ENCODE measurements at regions of chr3 and their contacts with region 1.

Region 1: DNA sequence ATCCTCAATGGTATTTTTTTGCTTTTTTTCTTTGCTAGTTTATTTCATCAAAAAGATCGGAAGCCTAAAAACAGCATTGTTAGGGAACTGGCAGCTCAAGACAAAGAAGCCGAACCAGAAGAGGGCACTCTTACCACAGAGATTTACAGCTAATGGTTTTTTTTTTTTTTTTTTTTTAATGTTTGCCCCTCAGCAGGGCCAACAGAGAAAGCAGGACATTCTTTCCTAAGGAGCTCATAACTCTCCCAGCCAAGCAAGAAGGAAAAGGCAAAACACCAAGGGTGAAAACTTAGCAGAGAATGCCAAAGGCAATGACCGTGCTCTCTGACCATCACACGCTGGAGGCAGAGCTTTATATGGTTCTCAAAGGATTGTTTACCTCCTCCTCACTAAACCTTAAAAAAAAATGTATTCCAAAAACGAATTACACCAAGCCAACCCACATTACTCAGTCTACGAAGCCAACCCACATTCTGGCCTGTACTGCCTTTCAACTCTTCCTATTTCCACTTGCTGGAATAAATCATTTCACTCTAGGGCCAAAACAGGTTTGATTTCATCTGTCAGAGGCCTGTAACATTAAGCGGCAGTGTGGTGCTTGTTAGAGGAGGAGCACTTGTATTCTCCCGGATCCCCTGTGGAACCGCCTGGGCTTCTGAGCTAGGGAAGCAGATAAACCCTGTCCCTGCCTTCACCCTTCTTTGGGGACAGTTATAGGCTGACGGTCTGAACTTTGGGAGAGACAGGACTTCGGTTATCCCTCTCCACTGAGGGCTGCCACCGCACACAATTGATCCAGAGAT is 35.6 kb upstream of the GYG1 start:
- DNase-seq: peak; percentile 41 to 59
- H3K4me3 ChIP-seq: no peak overlapping the region
- H3K4me3 Mint-ChIP-seq: no peak overlapping the region
- H3K27ac Mint-ChIP-seq: no peak overlapping the region
- H3K4me1 ChIP-seq: peaks cover 4% of the 10 kb centered on the region; the same call in 1 of the 2 replicates
- H3K4me1 Mint-ChIP-seq: no peaks in the 10 kb centered on the region
- H3K27me3 ChIP-seq: no peaks in the 10 kb centered on the region; the same call in 1 of the 2 replicates
- H3K27me3 Mint-ChIP-seq: peaks cover 4% of the 10 kb centered on the region
- CTCF ChIP-seq: peak; percentile 29 to 77

Region 2: GRCh38 chr3:149020196-149020838 is 64.6 kb after region 1 on chr3:
- CTCF ChIA-PET with region 1: no interaction called
- POLR2A ChIA-PET with region 1: no interaction called
- intact Hi-C with region 1: loop called (anchors 5 kb)
- DNase-seq: no peak
- H3K4me3 ChIP-seq: no peak overlapping the region
- H3K4me3 Mint-ChIP-seq: no peak overlapping the region
- H3K27ac Mint-ChIP-seq: no peak overlapping the region
- H3K4me1 ChIP-seq: no peaks in the 10 kb centered on the region
- H3K4me1 Mint-ChIP-seq: no peaks in the 10 kb centered on the region
- H3K27me3 ChIP-seq: no peaks in the 10 kb centered on the region
- H3K27me3 Mint-ChIP-seq: no peaks in the 10 kb centered on the region
- CTCF ChIP-seq: no peak

Region 3: DNA sequence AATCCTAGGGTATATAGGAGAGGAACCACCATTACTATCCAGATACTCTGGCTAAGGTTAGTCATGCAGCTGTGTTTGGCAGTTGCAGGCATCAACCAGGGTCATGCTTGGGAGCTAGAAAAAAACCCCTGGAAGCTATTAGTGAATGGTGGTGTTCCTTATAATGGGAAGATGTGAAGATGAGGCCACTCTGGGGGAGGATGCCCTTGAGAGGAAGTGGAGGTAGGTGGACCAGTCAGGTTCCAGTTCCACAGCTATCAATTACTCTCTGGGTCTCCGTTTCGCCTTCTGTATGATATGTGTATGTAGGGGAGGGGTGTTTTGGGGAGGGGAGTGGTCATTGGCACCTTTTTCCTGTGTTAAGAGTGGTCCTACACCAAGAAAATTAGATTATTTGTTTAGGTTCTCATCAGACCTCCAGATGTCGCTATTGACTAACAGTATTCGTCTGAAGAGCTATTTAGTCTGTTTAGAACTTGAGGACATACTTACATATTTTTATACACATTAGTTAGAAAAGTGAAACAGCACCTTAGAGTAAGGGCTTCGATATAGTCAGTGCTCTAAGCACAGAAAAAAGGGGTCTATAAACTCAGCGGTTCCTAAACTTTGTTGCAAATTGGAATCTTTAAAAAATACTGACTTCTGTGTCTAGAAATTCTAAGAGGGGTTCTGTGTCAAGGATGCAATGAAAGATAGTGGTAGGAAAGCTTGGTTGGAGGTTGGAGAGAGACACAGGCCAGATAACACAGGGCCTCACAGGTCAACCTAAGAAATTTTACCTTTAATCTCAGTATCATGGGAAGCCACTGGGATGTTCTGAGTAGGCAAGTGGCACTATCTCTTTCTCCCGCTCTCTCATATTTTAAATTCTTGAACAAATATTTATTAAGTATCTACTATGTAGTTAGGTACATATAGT is 164.6 kb after region 1 on chr3:
- CTCF ChIA-PET with region 1: interaction called, 15 read pairs
- POLR2A ChIA-PET with region 1: interaction called, 4 read pairs
- intact Hi-C with region 1: loop called (anchors 1 kb)
- DNase-seq: peak in 1 of 2 experiments; percentile 51
- H3K4me3 ChIP-seq: no peak overlapping the region
- H3K4me3 Mint-ChIP-seq: no peak overlapping the region
- H3K27ac Mint-ChIP-seq: no peak overlapping the region
- H3K4me1 ChIP-seq: peaks cover 4% of the 10 kb centered on the region; the same call in 1 of the 2 replicates
- H3K4me1 Mint-ChIP-seq: peaks cover 14% of the 10 kb centered on the region
- H3K27me3 ChIP-seq: no peaks in the 10 kb centered on the region
- H3K27me3 Mint-ChIP-seq: no peaks in the 10 kb centered on the region
- CTCF ChIP-seq: peak; percentile 42 to 64

Region 4: GRCh38 chr3:149273096-149273751 is 317.5 kb after region 1 on chr3:
- CTCF ChIA-PET with region 1: interaction called, 13 read pairs
- POLR2A ChIA-PET with region 1: no interaction called
- intact Hi-C with region 1: loop called (anchors 1 kb)
- DNase-seq: peak; percentile 57 to 70
- H3K4me3 ChIP-seq: no peak overlapping the region
- H3K4me3 Mint-ChIP-seq: no peak overlapping the region
- H3K27ac Mint-ChIP-seq: no peak overlapping the region
- H3K4me1 ChIP-seq: peaks cover 12% of the 10 kb centered on the region
- H3K4me1 Mint-ChIP-seq: peaks cover 21% of the 10 kb centered on the region
- H3K27me3 ChIP-seq: no peaks in the 10 kb centered on the region
- H3K27me3 Mint-ChIP-seq: no peaks in the 10 kb centered on the region
- CTCF ChIP-seq: peak; percentile 90 to 95

Region 5: DNA sequence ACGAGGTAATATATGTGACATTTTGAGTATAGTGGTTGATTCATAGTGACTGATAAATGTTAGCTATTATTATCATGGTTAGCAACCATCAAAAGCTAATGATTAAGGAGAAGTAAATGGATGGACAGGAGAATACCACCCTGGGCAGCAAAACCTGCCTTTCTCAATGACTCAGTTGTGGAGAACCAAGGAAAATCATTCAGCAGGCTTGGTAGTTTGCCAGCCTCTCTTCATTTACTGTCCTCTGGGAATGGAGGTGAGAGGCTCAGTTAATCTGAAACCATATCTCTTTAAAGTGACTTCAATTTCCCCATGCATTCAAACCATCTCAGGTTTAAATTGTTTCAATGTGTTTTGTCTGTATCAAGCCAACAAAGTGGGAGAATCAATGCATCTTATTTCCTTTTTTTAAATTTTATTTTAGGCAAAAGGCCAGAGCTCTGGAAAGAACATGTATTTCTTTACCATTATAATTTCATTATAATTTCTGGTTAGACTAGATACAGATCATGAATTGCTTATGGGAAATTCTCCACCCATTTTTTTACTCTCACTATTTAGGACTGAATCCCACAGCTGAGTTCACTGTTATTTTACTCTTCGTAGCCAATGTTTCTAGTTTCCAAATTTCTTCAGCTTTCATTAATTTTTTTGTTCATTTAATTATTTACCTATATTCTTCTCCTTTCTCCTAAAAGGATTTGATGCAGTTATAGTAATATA is 375.0 kb after region 1 on chr3:
- CTCF ChIA-PET with region 1: interaction called, 7 read pairs
- POLR2A ChIA-PET with region 1: no interaction called
- intact Hi-C with region 1: loop called (anchors 1 kb)
- DNase-seq: no peak
- H3K4me3 ChIP-seq: no peak overlapping the region
- H3K4me3 Mint-ChIP-seq: no peak overlapping the region
- H3K27ac Mint-ChIP-seq: no peak overlapping the region
- H3K4me1 ChIP-seq: no peaks in the 10 kb centered on the region
- H3K4me1 Mint-ChIP-seq: no peaks in the 10 kb centered on the region
- H3K27me3 ChIP-seq: no peaks in the 10 kb centered on the region
- H3K27me3 Mint-ChIP-seq: no peaks in the 10 kb centered on the region
- CTCF ChIP-seq: no peak

Region 6: DNA sequence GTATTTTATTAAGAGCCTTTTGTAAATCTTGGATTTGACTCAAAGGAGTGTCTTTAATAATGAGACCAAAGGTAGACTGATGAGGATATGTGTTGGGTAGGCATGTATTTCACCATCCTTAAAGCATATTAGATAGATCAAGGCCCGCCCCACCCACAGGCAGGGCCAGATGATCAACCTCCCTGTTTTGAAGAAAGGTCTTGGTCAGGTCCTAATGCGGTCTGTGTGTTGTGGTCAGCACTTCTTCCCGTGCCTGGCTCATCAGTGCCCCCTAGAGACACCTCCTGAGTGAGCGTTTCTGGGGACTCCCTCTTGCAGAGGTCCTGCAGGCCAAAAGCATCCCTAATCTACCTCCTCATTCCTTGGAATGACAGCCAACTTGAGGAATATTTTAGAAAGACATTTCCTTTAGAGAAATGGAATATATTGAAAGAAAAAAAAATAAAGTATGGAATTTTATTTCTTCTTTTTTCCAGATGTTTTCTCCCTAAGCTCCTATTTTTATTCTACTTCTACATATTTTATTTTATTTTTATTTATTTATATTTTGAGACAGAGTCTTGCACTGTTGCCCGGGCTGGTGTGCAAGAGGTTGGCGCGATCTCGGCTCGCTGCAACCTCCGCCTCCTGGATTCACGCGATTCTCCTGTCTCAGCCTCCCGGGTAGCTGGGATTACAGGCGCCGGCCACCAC is 524.7 kb after region 1 on chr3:
- CTCF ChIA-PET with region 1: no interaction called
- POLR2A ChIA-PET with region 1: no interaction called
- intact Hi-C with region 1: loop called (anchors 10 kb)
- DNase-seq: peak; percentile 87 to 88
- H3K4me3 ChIP-seq: no peak overlapping the region
- H3K4me3 Mint-ChIP-seq: no peak overlapping the region
- H3K27ac Mint-ChIP-seq: no peak overlapping the region
- H3K4me1 ChIP-seq: peaks cover 9% of the 10 kb centered on the region
- H3K4me1 Mint-ChIP-seq: peaks cover 7% of the 10 kb centered on the region
- H3K27me3 ChIP-seq: no peaks in the 10 kb centered on the region
- H3K27me3 Mint-ChIP-seq: no peaks in the 10 kb centered on the region
- CTCF ChIP-seq: peak; percentile 86 to 88